Mammary epithelial cell (primary cell): ENCODE measurements at regions of chr6 and their contacts with region 1.

Region 1: DNA sequence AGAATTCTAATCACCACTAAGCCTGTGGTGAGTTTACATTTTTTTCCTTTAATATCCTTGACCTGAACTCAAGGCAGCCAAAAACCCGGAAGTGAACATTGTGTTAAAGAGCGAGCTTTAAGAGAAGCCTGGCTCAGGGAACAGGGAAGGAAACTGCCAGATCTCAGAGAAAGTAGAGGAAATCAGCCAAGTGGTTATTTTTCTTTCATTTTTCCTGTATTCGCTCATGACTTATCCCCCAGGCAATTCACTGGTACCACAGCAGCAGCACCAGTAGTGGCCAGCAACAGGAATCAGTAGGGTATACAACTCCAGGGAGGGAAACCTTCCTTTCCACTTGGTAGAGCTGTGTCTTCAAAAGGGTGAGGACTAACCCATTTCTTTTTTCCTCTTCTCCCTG is 89.6 kb upstream of the HMGCLL1 start:
- DNase-seq: no peak
- H3K4me3 ChIP-seq: no peak overlapping the region
- H3K27ac ChIP-seq: no peak overlapping the region
- H3K4me1 ChIP-seq: no peaks in the 10 kb centered on the region
- H3K27me3 ChIP-seq: no peaks in the 10 kb centered on the region
- CTCF ChIP-seq: no peak

Region 2: GRCh38 chr6:55568808-55569439 is 99.7 kb before region 1 on chr6:
- CTCF ChIA-PET with region 1: no interaction called
- dilution Hi-C with region 1: loop called (anchors 10 kb)
- in situ Hi-C with region 1: no loop called
- intact Hi-C with region 1: no loop called
- DNase-seq: no peak
- H3K4me3 ChIP-seq: no peak overlapping the region
- H3K27ac ChIP-seq: no peak overlapping the region
- H3K4me1 ChIP-seq: no peaks in the 10 kb centered on the region
- H3K27me3 ChIP-seq: peaks cover 4% of the 10 kb centered on the region
- CTCF ChIP-seq: no peak